Activated B cell treated with CpG ODN at 0.5 μM for 24 hours (primary cell): ENCODE measurements at regions of chr10 and their contacts with region 1.

Region 1: DNA sequence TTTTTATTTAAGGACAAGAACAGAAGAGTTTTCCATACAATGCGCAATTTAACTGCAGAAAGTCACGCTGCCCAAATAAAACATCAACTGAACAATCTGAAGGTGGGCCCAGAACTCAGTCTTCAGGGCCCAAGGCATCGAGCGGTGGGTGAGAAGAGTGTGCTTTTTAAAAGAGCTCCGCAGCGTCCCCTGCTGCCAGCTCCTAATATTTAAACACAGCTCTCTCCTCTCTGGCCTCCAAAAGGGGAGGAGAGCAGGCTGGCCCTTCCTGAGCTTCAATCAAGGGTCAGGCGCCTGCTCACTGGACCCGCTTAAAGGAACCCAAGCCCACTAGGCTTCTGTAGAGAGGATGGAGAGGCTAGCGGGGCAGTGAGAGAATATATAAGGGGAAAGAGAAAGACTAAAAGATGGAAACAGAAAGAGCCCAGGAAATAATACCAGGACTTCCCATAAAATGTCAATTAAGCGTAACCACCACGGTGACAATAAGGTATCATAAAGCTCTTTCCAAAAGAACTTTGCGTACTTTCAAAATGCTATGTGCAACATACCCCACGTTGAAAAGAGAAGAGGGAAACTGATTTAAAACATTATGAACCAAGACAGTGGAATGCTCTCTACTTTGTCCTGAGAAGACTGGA is 2.8 kb downstream of the FAM53B start:
- DNase-seq: peak; percentile 67
- ATAC-seq: peak; percentile 54
- H3K4me3 Mint-ChIP-seq: peak overlapping the region; percentile 97
- H3K27ac Mint-ChIP-seq: peak overlapping the region; percentile 97
- H3K4me1 Mint-ChIP-seq: peaks cover 75% of the 10 kb centered on the region
- H3K27me3 Mint-ChIP-seq: no peaks in the 10 kb centered on the region
- CTCF ChIP-seq: peak; percentile 41

Region 2: GRCh38 chr10:124231168-124232155 is 509.9 kb before region 1 on chr10:
- CTCF ChIA-PET with region 1: no interaction called
- POLR2A ChIA-PET with region 1: no interaction called
- intact Hi-C with region 1: loop called (anchors 5 kb)
- DNase-seq: no peak
- ATAC-seq: peak; percentile 64
- H3K4me3 Mint-ChIP-seq: no peak overlapping the region
- H3K27ac Mint-ChIP-seq: peak overlapping the region; percentile 74
- H3K4me1 Mint-ChIP-seq: no peaks in the 10 kb centered on the region
- H3K27me3 Mint-ChIP-seq: no peaks in the 10 kb centered on the region
- CTCF ChIP-seq: no peak

Region 3: GRCh38 chr10:124486635-124487034 is 254.8 kb before region 1 on chr10:
- CTCF ChIA-PET with region 1: no interaction called
- POLR2A ChIA-PET with region 1: no interaction called
- intact Hi-C with region 1: no loop called
- DNase-seq: no peak
- ATAC-seq: no peak
- H3K4me3 Mint-ChIP-seq: no peak overlapping the region
- H3K27ac Mint-ChIP-seq: no peak overlapping the region
- H3K4me1 Mint-ChIP-seq: no peaks in the 10 kb centered on the region
- H3K27me3 Mint-ChIP-seq: no peaks in the 10 kb centered on the region
- CTCF ChIP-seq: no peak

Region 4: DNA sequence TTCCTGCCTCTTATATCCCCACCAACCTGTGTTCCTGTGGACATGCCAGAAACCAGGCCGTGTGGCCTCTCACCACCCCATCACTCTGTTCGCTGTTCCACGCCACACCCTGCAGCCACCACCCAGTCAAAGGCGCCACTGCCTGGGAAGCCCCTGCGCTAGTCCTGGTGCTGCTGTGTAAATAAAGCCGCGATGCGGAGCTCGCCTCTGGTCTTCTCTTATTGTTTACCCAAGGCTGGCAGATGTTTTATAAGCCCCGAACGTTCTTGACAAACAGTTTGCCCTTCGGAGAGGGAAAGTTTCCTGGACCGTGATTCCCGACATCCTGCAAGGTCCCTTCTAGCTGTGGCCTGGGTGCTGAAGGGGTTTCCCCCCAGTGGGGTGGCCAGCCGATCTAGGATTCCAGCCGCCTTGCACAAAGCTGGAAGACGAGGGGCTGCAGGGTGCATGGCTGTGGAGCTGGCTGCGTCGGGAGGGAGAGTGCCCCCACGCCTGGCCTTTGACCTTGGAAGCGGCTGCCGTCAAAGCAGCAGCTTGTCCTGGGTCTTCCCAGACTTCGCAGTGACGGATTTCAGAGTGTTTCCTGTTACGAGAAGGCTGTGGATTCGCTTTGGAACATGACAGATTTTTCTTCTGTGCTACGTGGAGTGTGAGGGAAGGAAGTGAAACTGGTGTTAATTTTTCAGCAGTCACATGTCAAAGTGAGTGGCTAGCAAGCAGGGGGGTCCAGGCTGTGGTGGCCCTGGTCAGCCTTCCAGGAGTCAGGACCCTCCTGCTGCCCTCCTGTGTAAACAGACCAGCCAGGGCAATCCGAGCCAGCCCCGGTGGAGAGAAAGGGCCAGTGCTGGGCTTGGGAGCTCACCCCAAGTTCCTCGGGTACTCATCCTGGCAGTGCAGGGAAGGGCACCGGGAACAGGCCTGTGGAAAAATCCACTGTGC is 218.2 kb before region 1 on chr10:
- CTCF ChIA-PET with region 1: interaction called, 307 read pairs
- POLR2A ChIA-PET with region 1: interaction called, 3 read pairs
- intact Hi-C with region 1: no loop called
- DNase-seq: no peak
- ATAC-seq: peak; percentile 77
- H3K4me3 Mint-ChIP-seq: peak overlapping the region; percentile 68
- H3K27ac Mint-ChIP-seq: peak overlapping the region; percentile 50
- H3K4me1 Mint-ChIP-seq: peaks cover 16% of the 10 kb centered on the region
- H3K27me3 Mint-ChIP-seq: no peaks in the 10 kb centered on the region
- CTCF ChIP-seq: no peak

Region 5: DNA sequence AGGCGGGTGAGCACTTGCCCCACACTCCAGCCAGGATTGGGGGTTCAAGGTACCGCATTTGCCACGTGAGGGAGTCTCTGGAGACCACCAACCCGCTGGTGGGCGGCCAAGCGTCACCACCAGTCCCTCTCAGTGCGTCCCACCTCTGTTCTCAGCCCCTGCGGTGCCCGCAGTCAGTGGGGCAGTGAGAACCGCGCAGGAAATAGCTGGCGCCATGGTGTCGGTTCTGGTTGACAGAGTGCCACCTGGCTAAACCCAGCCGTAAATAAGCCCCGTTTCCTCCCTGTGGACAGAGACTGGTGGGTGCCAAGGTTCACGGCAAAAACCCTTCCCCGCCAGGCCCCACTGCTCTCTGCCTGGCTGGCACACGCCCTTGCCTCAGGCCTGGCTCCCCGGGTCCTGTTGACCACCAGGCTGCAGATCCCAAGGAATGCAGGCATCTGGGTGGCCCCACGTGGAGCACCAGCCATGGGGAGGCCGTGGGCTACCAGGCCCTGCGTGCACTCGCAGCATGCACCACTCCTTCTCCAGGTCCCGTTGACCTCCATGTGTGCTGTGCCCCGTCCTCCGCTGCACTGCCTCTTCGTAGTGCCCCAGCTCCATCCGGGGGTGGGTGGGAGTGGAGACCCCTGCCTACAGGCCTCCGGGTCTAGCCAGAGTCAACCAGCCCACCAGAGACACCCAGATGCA is 139.8 kb before region 1 on chr10:
- CTCF ChIA-PET with region 1: interaction called, 14 read pairs
- POLR2A ChIA-PET with region 1: interaction called, 62 read pairs
- intact Hi-C with region 1: loop called (anchors 1 kb)
- DNase-seq: peak; percentile 75
- ATAC-seq: peak; percentile 86
- H3K4me3 Mint-ChIP-seq: peak overlapping the region; percentile 70
- H3K27ac Mint-ChIP-seq: peak overlapping the region; percentile 94
- H3K4me1 Mint-ChIP-seq: peaks cover 97% of the 10 kb centered on the region
- H3K27me3 Mint-ChIP-seq: no peaks in the 10 kb centered on the region
- CTCF ChIP-seq: no peak

Region 6: DNA sequence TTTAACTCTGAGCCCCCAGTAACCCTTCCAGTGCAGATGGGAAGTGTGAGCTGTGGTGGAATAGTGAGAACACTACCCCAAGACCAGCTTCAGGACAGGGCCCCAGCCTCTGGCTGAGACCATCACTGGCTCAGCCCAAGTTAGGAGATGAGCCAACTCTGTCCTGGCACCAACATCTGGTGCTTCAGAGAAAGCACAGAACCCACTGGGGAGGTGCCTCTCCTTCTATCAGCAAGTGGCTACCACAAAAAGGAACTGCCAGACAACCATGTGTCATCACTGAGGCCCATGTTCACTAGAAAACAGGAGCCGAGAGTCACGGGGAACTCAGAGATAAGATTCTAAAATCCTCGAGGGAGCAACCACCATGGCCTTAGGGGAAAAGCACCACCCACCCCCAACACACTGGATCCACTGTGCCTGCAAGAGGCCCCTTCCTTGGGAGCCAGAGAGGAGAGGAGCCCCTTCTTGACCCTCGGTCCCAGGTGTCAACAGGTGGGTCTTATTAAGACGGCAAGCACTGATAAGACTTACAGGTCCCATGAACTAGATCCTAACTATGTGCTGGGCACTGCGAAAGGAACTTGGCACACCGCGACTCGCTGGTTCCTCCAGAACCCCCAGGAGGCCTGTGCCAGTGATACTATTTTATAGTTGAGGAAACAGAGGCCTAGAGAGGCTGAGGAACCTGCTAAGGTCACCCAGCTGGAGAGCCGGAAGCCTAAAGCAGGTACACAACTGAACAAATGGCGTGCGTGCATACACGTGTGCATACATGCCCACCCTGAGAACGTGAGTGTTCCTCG is 99.9 kb before region 1 on chr10:
- CTCF ChIA-PET with region 1: interaction called, 17 read pairs
- POLR2A ChIA-PET with region 1: interaction called, 39 read pairs
- intact Hi-C with region 1: loop called (anchors 1 kb)
- DNase-seq: no peak
- ATAC-seq: peak; percentile 81
- H3K4me3 Mint-ChIP-seq: peak overlapping the region; percentile 74
- H3K27ac Mint-ChIP-seq: peak overlapping the region; percentile 94
- H3K4me1 Mint-ChIP-seq: peaks cover 100% of the 10 kb centered on the region
- H3K27me3 Mint-ChIP-seq: no peaks in the 10 kb centered on the region
- CTCF ChIP-seq: no peak

Region 7: GRCh38 chr10:124697830-124698544 is 43.4 kb before region 1 on chr10:
- CTCF ChIA-PET with region 1: interaction called, 28 read pairs
- POLR2A ChIA-PET with region 1: interaction called, 34 read pairs
- intact Hi-C with region 1: loop called (anchors 1 kb)
- DNase-seq: peak; percentile 44
- ATAC-seq: peak; percentile 45
- H3K4me3 Mint-ChIP-seq: peak overlapping the region; percentile 69
- H3K27ac Mint-ChIP-seq: peak overlapping the region; percentile 96
- H3K4me1 Mint-ChIP-seq: peaks cover 100% of the 10 kb centered on the region
- H3K27me3 Mint-ChIP-seq: no peaks in the 10 kb centered on the region
- CTCF ChIP-seq: no peak

Region 8: GRCh38 chr10:124916585-124917427 is 175.4 kb after region 1 on chr10:
- CTCF ChIA-PET with region 1: interaction called, 3 read pairs
- POLR2A ChIA-PET with region 1: interaction called, 4 read pairs
- intact Hi-C with region 1: loop called (anchors 2 kb)
- DNase-seq: peak; percentile 98
- ATAC-seq: peak; percentile 92
- H3K4me3 Mint-ChIP-seq: peak overlapping the region; percentile 84
- H3K27ac Mint-ChIP-seq: peak overlapping the region; percentile 90
- H3K4me1 Mint-ChIP-seq: peaks cover 37% of the 10 kb centered on the region
- H3K27me3 Mint-ChIP-seq: peaks cover 2% of the 10 kb centered on the region
- CTCF ChIP-seq: no peak